ENCODE measurements at regions of chr1 and their contacts with region 1.

Region 1: DNA sequence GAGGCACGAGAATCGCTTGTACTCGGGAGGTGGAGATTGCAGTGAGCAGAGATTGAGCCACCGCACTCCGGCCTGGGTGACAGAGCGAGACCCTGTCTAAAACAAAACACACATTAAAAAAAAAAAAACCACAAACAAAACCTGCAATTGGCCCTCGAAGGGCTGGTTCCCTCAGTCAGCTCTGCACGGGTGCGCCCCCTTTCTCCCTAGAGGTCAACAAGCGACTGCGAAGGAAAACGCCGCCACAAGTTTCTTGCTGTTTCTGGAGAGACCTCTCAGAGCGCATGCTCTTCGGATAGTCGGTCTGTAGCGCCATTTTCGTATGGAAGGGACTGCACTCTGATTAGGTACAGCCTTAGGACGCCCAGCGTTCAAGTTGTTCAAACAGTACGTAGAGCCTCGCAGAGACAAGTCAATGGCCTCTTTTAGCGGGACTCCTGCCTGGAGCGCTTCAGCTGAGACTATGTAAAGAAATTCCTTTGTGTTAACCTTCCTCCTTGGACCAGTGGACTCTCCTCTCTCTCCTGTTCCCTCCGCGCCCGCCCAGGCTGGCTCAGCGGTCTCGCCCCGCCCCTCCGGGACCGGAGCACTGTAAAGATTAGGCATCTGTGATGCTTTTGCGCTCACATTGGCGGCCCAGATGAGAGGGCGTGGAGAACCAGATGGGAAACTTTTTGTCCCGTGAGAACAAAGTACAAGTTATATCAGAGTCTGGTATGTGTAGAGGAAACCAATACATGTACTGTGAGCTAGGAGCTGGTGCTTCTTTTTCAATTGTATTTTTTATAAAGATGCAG is 1.0 kb upstream of the CDC14A start:
- DNase-seq: peak; percentile 97
- H3K4me3 ChIP-seq: peak overlapping the region; percentile 94
- H3K27ac ChIP-seq: peak overlapping the region; percentile 79
- H3K4me1 ChIP-seq: peaks cover 24% of the 10 kb centered on the region
- H3K27me3 ChIP-seq: no peaks in the 10 kb centered on the region
- CTCF ChIP-seq: peak; percentile 40

Region 2: DNA sequence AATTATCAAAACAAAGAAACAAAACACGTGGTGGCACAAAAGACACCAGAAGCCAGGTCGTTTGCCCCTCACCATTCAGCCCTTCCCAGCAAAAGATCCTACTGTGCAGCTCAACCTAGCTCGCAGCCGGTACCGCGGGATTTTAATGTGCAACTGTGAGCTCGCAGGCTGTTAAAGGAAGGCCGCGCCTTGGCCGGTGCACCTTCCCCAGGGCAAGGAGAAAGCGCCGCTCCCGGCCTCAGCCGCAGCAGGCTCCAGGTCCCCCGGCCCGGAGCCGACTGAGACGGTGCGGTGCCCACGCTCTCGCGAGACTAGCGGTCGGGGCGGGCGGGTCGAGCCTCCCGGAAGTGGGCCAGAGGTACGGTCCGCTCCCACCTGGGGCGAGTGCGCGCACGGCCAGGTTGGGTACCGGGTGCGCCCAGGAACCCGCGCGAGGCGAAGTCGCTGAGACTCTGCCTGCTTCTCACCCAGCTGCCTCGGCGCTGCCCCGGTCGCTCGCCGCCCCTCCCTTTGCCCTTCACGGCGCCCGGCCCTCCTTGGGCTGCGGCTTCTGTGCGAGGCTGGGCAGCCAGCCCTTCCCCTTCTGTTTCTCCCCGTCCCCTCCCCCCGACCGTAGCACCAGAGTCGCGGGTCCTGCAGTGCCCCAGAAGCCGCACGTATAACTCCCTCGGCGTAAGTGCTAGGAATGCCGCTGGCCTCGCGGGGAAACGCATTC is 501.4 kb before region 1 on chr1 and contains the start of gene AGL:
- CTCF ChIA-PET with region 1: no interaction called
- POLR2A ChIA-PET with region 1: no interaction called
- intact Hi-C with region 1: loop called (anchors 5 kb)
- DNase-seq: peak; percentile 85
- H3K4me3 ChIP-seq: peak within 1 kb of the TSS; percentile 55
- H3K27ac ChIP-seq: peak within 1 kb of the TSS; percentile 82
- H3K4me1 ChIP-seq: peaks cover 15% of the 10 kb centered on the region
- H3K27me3 ChIP-seq: no peaks in the 10 kb centered on the region
- CTCF ChIP-seq: no peak
- total RNA-seq, gene AGL: 11.9 and 12.7 TPM in 2 replicates

Region 3: DNA sequence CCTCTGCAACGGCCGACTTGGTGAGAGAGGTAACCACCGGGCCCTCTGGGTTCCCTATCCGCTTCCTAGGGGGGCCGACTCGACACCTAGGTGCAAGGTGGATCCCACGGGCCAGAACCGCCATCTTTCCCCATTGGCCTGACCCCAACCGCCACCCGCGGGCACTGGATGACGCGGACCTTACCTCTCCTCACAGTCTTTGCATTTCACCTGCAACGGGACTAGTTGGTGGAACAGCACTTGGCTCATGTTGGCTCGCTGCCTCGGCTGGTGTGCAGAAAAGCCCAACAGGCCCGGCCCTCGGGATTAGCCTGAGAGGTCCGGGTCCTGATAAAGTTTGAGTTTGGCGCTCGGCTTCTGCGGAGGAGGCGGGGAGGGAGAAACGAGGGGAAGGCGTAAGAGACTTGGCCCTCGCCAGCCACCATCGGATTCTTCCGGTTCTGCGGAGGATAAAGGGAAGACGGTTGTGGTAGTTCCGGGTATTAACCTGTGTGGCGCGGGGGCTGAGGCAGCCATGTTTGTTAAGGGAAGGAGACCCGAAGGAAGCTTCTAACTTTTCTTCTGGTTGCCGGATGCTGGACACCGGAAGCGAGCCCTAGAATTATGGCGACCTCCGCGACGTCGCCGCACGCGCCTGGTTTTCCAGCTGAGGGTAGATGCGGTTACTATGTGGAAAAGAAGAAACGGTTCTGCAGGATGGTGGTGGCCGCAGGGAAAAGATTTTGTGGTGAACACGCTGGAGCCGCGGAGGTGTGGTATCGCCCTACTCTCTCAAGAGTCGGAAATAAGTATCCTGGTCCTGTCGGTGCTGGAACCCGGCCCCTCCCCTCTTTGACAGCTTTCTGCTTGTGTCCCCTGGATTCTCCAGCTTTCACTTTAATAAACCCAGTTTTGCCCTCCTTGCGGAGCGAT is 218.5 kb before region 1 on chr1 and contains the starts of genes SASS6 and TRMT13:
- CTCF ChIA-PET with region 1: no interaction called
- POLR2A ChIA-PET with region 1: no interaction called
- intact Hi-C with region 1: loop called (anchors 10 kb)
- DNase-seq: peak; percentile 99
- H3K4me3 ChIP-seq: peak within 1 kb of the TSS; percentile 93
- H3K27ac ChIP-seq: peak within 1 kb of the TSS; percentile 82
- H3K4me1 ChIP-seq: peaks cover 20% of the 10 kb centered on the region
- H3K27me3 ChIP-seq: no peaks in the 10 kb centered on the region
- CTCF ChIP-seq: no peak
- total RNA-seq, gene SASS6: 15.1 and 16.8 TPM in 2 replicates
- total RNA-seq, gene TRMT13: 19.0 and 23.3 TPM in 2 replicates

Region 4: GRCh38 chr1:100177295-100178041 is 173.8 kb before region 1 on chr1:
- CTCF ChIA-PET with region 1: no interaction called
- POLR2A ChIA-PET with region 1: interaction called, 20 read pairs
- intact Hi-C with region 1: no loop called
- DNase-seq: no peak
- H3K4me3 ChIP-seq: no peak overlapping the region
- H3K27ac ChIP-seq: no peak overlapping the region
- H3K4me1 ChIP-seq: no peaks in the 10 kb centered on the region
- H3K27me3 ChIP-seq: no peaks in the 10 kb centered on the region
- CTCF ChIP-seq: no peak

Region 5: GRCh38 chr1:100265931-100266740 is 85.2 kb before region 1 on chr1 and contains the start of gene RTCA:
- CTCF ChIA-PET with region 1: no interaction called
- POLR2A ChIA-PET with region 1: no interaction called
- intact Hi-C with region 1: loop called (anchors 5 kb)
- DNase-seq: peak; percentile 98
- H3K4me3 ChIP-seq: peak within 1 kb of the TSS; percentile 93
- H3K27ac ChIP-seq: peak within 1 kb of the TSS; percentile 91
- H3K4me1 ChIP-seq: no peaks in the 10 kb centered on the region
- H3K27me3 ChIP-seq: no peaks in the 10 kb centered on the region
- CTCF ChIP-seq: no peak
- total RNA-seq, gene RTCA: 45.4 and 57.7 TPM in 2 replicates

Measured in A673 (cell line).